Activated CD4-positive, alpha-beta T cell treated with anti-CD3 and anti-CD28 coated beads, Interleukin-2, amount 10 ng/mL, durations not matched to agents 7 days and 5 days (primary cell): ENCODE measurements at regions of chr18 and their contacts with region 1.

Region 1: GRCh38 chr18:62189208-62189607 is 2.2 kb downstream of the RELCH start:
- DNase-seq: no peak
- H3K4me3 Mint-ChIP-seq: peak overlapping the region; percentile 99
- H3K27ac Mint-ChIP-seq: peak overlapping the region; percentile 16
- H3K4me1 Mint-ChIP-seq: peaks cover 75% of the 10 kb centered on the region
- H3K27me3 Mint-ChIP-seq: no peaks in the 10 kb centered on the region

Region 2: GRCh38 chr18:62037989-62038778 is 151.0 kb before region 1 on chr18:
- CTCF ChIA-PET with region 1: no interaction called
- POLR2A ChIA-PET with region 1: no interaction called
- DNase-seq: no peak
- H3K4me3 Mint-ChIP-seq: no peak overlapping the region
- H3K27ac Mint-ChIP-seq: no peak overlapping the region
- H3K4me1 Mint-ChIP-seq: peaks cover 14% of the 10 kb centered on the region
- H3K27me3 Mint-ChIP-seq: no peaks in the 10 kb centered on the region

Region 3: DNA sequence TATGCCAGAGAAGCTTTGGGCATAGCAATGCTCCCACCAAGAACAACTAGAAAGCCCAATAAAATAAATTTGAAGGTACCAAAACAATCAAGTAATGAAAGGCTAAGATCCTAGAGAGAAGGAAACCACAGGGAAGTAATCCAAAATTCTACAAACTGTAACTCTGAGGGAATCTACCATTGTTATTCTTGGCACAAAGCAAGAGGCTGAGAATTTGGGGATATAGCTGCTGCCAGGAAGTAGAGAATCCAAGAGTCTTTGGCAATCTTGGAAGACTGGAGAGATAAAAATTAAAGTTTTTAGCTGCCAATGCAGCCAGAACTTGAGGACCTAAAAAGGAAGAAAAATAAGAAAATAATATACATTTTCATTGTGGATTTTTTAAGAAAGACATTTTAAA is 70.9 kb before region 1 on chr18:
- CTCF ChIA-PET with region 1: no interaction called
- POLR2A ChIA-PET with region 1: no interaction called
- DNase-seq: no peak
- H3K4me3 Mint-ChIP-seq: no peak overlapping the region
- H3K27ac Mint-ChIP-seq: no peak overlapping the region
- H3K4me1 Mint-ChIP-seq: no peaks in the 10 kb centered on the region
- H3K27me3 Mint-ChIP-seq: no peaks in the 10 kb centered on the region

Region 4: GRCh38 chr18:62131301-62131909 is 57.8 kb before region 1 on chr18:
- CTCF ChIA-PET with region 1: no interaction called
- POLR2A ChIA-PET with region 1: no interaction called
- DNase-seq: peak; percentile 79
- H3K4me3 Mint-ChIP-seq: no peak overlapping the region
- H3K27ac Mint-ChIP-seq: no peak overlapping the region
- H3K4me1 Mint-ChIP-seq: no peaks in the 10 kb centered on the region
- H3K27me3 Mint-ChIP-seq: no peaks in the 10 kb centered on the region

Region 5: GRCh38 chr18:62248313-62248712 is 59.1 kb after region 1 on chr18:
- CTCF ChIA-PET with region 1: no interaction called
- POLR2A ChIA-PET with region 1: interaction called, 10 read pairs
- DNase-seq: no peak
- H3K4me3 Mint-ChIP-seq: no peak overlapping the region
- H3K27ac Mint-ChIP-seq: no peak overlapping the region
- H3K4me1 Mint-ChIP-seq: no peaks in the 10 kb centered on the region
- H3K27me3 Mint-ChIP-seq: no peaks in the 10 kb centered on the region